Calu3 (cell line): ENCODE measurements at regions of chr5 and their contacts with region 1.

Region 1: DNA sequence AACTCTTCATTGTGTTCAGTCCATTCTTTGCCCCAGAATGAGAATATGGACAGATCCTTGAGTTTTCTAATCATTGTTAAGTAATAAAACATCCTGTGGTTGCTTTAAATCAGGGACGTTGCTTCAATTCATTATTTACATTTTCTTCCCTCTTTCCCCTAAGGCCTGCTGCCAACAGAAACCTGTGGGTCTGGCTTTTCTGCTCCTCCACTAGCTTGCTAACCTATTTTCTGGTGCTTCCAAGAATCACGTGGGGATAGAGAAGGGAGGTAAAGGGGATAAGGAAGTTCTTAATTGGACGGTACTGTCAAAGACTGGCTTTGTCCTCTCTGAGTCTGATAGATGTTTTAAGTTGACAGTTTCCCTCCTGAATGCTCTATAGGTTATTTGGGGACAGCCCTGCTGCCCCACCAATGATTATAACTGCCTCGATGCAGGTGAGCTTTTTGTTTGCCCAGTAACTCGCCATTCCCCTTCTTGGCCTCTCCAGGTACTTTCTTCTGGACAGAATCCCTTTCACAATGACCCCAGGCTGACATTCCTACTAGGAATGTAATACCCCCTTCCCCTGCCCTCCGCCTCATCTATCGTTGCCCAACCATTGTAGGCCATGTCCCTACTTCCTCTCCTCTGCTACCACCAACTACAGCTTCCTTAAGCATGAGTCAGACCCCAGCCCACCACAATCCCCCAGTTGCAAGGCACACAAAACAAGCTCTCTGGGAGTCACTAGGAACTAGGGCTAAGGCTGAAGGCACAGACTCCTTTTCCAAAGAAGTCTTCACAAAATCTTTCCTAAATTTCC is 19.9 kb upstream of the CPEB4 start:
- DNase-seq: peak; percentile 73
- H3K4me3 Mint-ChIP-seq: peak overlapping the region; percentile 5
- H3K27ac Mint-ChIP-seq: peak overlapping the region; percentile 42
- H3K4me1 Mint-ChIP-seq: peaks cover 24% of the 10 kb centered on the region
- H3K27me3 Mint-ChIP-seq: no peaks in the 10 kb centered on the region
- CTCF ChIP-seq: no peak

Region 2: DNA sequence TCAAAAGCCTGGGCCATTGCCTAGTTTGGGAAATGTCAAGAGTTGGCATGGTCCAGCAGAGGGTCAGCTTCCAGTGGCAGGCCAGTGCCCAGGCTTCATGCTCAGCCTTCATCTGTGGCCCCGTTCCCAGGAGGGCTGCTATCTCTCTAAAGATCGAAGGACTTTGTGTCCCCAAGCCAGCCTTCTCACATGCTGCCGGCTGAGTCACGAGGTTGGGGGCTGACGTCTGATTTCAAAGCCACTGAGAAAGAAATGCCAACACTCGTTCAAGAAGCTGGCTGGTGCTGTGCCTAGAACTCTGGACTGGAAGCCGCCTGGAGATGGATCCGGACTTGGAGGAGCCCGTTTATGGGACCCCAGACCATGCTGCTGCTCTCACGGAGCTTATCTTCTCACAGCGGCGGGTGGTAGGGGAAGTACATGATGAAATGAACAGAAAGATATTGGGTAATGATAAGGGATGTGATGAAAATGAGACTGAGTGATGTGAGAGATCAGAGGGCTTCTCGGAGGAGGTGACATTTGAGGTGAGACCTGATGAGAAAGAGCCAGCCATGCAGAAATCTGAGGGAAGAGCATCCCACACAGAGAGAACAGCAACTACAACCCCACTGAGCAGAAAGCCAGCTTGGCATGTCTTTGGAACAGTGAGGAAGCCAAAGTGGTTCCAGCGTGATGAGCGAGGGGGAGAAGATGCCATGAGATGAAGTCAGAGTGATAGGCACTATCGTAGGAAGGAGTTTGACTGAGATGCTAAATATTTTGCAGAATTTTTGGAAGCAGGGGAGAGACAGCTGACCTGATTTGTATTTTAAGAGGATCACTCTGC is 196.9 kb before region 1 on chr5:
- CTCF ChIA-PET with region 1: no interaction called
- intact Hi-C with region 1: no loop called
- DNase-seq: no peak
- H3K4me3 Mint-ChIP-seq: no peak overlapping the region
- H3K27ac Mint-ChIP-seq: no peak overlapping the region
- H3K4me1 Mint-ChIP-seq: no peaks in the 10 kb centered on the region
- H3K27me3 Mint-ChIP-seq: peaks cover 39% of the 10 kb centered on the region
- CTCF ChIP-seq: no peak

Region 3: DNA sequence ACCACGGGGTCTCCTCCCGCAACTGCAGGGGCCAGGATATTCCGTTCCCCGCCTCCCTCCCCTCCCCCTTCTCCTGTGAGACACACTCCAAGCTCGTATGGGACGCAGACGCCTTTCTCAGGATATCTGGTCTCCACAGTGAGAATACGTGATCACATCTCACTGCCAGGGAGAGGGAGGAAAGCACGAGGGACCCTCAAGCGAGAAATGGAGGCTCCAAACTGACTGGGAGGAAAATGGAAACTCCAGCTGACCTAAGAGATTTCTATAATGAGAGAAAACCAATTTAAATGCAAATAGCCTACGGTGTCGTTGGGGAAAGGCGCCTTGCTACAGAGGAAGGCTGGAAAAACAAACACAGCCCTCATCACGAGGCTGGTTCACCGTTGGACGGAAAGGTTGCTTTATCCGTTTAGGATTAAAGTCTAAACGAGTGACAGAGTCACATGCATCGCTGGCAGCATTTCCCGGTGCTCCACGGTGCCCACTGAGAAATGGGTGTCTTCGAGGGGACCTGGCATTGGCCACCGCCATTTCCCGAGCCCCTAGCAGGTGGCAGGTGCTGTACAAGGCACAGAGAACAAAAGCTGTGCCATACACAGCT is 97.1 kb before region 1 on chr5:
- CTCF ChIA-PET with region 1: interaction called, 11 read pairs
- intact Hi-C with region 1: no loop called
- DNase-seq: no peak
- H3K4me3 Mint-ChIP-seq: no peak overlapping the region
- H3K27ac Mint-ChIP-seq: no peak overlapping the region
- H3K4me1 Mint-ChIP-seq: peaks cover 12% of the 10 kb centered on the region
- H3K27me3 Mint-ChIP-seq: no peaks in the 10 kb centered on the region
- CTCF ChIP-seq: no peak

Region 4: GRCh38 chr5:174204535-174205313 is 336.4 kb after region 1 on chr5:
- CTCF ChIA-PET with region 1: no interaction called
- intact Hi-C with region 1: no loop called
- DNase-seq: peak; percentile 45
- H3K4me3 Mint-ChIP-seq: no peak overlapping the region
- H3K27ac Mint-ChIP-seq: no peak overlapping the region
- H3K4me1 Mint-ChIP-seq: no peaks in the 10 kb centered on the region
- H3K27me3 Mint-ChIP-seq: peaks cover 72% of the 10 kb centered on the region
- CTCF ChIP-seq: no peak